Adrenal gland (tissue), 19 donors: ENCODE measurements at regions of chr14 and their contacts with region 1.

Region 1: DNA sequence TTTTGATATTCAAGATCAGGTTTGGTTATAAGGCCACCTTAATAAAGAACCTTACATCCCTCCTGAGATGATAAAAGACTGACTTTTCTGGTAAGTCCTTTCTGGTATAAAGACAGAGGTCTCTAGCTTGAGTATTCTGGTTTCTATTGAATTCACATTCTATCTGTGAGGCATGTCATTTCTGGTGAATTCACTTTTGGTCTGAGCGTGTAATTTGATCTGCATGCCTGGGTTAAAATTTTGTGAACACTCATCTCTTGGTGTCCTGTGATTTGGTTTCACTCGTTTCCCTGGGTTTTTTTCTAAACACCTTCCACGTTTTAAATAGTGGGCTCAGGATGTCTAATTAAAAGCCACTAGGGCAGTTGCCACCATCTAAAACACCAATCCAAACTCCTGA is 12.2 kb downstream of the EIF5 start:
- DNase-seq: no peak
- H3K4me3 ChIP-seq: no peak overlapping the region
- H3K27ac ChIP-seq: peak overlapping the region in 2 of 5 donors; percentile 3 to 7
- H3K4me1 ChIP-seq: peaks cover 4 to 30% of the 10 kb centered on the region in 2 donors
- H3K27me3 ChIP-seq: no peaks in the 10 kb centered on the region
- CTCF ChIP-seq: no peak
- POLR2A ChIP-seq: no peak

Region 2: DNA sequence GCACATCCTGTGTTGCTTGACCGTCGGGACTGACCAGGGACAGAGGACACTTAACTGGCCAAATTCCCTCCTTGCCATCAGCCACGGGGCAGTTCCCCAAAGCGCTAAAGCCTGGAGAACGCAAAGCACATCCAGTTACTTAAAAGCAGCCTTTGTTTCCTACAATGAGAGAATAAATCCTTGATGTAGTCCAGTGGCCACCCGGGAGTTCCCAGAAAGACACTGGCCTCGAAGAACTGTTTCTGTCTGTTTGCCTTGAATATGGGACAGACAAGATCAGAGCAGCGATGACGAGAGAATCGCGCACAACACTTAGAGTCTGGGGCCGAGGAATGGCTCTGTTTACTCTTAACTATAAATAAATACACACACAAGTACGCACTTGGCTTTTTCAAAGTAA is 120.8 kb before region 1 on chr14:
- intact Hi-C with region 1: no loop called
- DNase-seq: no peak
- H3K4me3 ChIP-seq: no peak overlapping the region
- H3K27ac ChIP-seq: no peak overlapping the region
- H3K4me1 ChIP-seq: peaks cover 0 to 5% of the 10 kb centered on the region in 2 donors
- H3K27me3 ChIP-seq: peaks cover 7% of the 10 kb centered on the region
- CTCF ChIP-seq: no peak
- POLR2A ChIP-seq: no peak

Region 3: DNA sequence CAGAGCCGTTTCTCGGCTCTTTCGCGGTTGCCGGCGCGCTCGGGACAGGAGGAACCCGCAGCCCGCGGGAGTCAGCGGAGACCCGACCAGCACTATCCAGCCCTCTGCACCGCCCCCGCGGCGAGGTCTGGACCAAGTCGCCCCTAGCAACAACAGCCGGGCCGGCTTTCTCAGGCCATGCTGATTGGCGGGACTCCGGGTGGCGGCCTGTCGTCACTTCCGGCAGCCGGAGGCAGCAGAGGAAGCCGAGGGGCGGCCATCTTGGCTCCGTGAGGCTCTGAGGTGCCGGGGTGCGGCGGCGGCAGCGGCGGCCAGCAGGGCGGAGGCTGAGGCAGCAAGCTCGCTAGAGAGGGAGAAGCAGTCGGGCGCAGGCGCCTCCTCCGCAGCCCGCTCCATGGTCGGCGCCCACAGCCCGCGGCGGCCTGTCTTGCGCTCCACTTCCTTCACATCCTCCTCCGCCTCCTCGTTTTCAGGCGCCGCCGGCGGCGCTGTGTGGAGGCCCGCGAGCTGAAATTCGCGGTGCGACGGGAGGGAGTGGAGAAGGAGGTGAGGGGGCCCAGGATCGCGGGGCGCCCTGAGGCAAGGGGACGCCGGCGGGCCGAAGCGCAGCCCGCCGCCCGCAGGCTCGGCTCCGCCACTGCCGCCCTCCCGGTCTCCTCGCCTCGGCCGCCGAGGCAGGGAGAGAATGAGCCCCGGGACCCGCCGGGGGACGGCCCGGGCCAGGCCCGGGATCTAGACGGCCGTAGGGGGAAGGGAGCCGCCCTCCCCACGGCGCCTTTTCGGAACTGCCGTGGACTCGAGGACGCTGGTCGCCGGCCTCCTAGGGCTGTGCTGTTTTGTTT is 39.1 kb after region 1 on chr14 and contains the start of gene MARK3:
- intact Hi-C with region 1: loop called in 1 of 2 experiments (anchors 5 kb)
- DNase-seq: peak; percentile 96 to 99 (median 98)
- H3K4me3 ChIP-seq: peak within 1 kb of the TSS; percentile 84 to 91 (median 90)
- H3K27ac ChIP-seq: peak within 1 kb of the TSS; percentile 93 to 99 (median 97)
- H3K4me1 ChIP-seq: peaks cover 18 to 36% of the 10 kb centered on the region in 2 donors
- H3K27me3 ChIP-seq: no peaks in the 10 kb centered on the region
- CTCF ChIP-seq: peak in 3 of 6 experiments; percentile 18 to 30 (median 24)
- POLR2A ChIP-seq: peak; percentile 76 to 83
- total RNA-seq, gene MARK3: 73.1 to 144 (median 94.4) TPM

Region 4: GRCh38 chr14:103463149-103463548 is 116.9 kb after region 1 on chr14:
- intact Hi-C with region 1: loop called in 1 of 2 experiments (anchors 10 kb)
- DNase-seq: no peak
- H3K4me3 ChIP-seq: no peak overlapping the region
- H3K27ac ChIP-seq: no peak overlapping the region
- H3K4me1 ChIP-seq: no peaks in the 10 kb centered on the region
- H3K27me3 ChIP-seq: no peaks in the 10 kb centered on the region
- CTCF ChIP-seq: no peak
- POLR2A ChIP-seq: no peak